PC-9 (cell line): ENCODE measurements at regions of chr2 and their contacts with region 1.

Region 1: DNA sequence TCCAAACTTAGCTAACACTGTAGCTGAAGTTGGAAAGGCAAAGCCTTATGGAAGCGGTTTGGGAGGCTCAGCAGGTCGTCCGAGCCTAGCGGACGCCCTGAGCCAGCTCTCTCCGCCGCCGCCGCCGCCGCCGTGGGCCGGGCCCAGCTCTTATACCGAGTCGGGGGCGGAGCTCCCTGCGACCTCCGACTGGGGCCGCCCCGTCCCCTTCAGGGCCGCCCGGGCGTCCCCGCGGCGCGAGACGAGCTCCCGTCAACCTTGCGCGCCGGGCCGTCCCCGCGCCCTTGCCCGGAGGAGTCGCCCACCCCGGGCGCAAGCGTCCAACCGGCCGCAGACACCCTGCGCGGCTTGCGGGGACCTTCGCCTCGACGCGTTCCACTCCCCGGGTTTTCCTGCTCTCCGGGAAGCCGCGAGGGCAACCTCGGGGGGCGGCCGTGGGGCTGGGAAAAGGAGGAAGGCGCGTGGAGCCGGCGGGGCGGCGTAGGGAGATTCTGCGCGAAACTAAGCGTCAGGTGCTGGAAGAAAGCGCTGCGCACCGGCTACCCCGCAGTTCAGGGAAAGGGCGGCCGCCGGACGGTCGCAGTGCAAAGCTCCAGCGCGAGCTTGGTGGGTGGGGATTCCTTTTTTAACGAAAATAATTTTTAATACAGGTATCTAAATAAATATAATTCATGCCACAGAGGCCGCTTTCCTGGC is at the start of gene SLC40A1:
- DNase-seq: peak; percentile 53 to 76
- H3K4me3 ChIP-seq: peak within 1 kb of the TSS; percentile 73
- H3K27ac ChIP-seq: peak within 1 kb of the TSS; percentile 60
- H3K4me1 ChIP-seq: peaks cover 21% of the 10 kb centered on the region
- H3K27me3 ChIP-seq: no peaks in the 10 kb centered on the region
- CTCF ChIP-seq: no peak
- total RNA-seq, gene SLC40A1: 8.0 and 8.2 TPM in 2 replicates

Region 2: GRCh38 chr2:189483998-189484740 is 96.6 kb before region 1 on chr2:
- CTCF ChIA-PET with region 1: no interaction called
- POLR2A ChIA-PET with region 1: interaction called, 3 read pairs
- intact Hi-C with region 1: loop called (anchors 10 kb)
- DNase-seq: no peak
- H3K4me3 ChIP-seq: no peak overlapping the region
- H3K27ac ChIP-seq: no peak overlapping the region
- H3K4me1 ChIP-seq: peaks cover 12% of the 10 kb centered on the region
- H3K27me3 ChIP-seq: no peaks in the 10 kb centered on the region
- CTCF ChIP-seq: no peak

Region 3: DNA sequence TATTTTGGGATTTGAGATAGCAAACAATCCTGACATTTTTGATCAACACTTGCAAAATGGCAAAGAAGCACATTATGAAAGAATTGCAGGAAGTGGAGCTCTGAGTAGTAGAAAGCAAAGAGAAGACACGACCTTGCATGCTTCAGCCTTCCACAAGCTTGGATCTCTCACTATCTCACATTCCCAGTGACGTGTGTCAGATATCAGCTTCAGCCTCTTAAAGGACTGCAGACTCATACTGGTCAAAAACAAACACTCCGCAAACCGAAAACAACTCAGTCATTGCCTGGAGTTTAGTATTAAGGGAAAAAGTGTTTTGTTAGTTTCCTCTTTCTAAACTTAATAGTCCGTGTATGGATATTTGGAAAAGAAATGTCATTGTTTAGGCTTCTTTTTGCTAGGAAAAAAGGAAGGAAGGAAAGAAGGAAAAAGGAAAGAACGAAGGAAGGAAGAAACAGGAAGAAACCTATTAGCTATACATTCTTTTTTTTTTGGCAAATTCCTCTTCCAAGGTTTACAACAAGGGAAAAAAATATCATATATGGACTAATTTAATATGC is 32.4 kb after region 1 on chr2:
- CTCF ChIA-PET with region 1: no interaction called
- POLR2A ChIA-PET with region 1: interaction called, 5 read pairs
- intact Hi-C with region 1: loop called (anchors 1 kb)
- DNase-seq: peak; percentile 13 to 69
- H3K4me3 ChIP-seq: peak overlapping the region; percentile 8; the same call in 1 of the 2 replicates
- H3K27ac ChIP-seq: peak overlapping the region; percentile 43; the same call in 1 of the 2 replicates
- H3K4me1 ChIP-seq: 0 out of 2 replicates have a peak, but pooled peaks cover 10% of the 10 kb centered on the region
- H3K27me3 ChIP-seq: no peaks in the 10 kb centered on the region
- CTCF ChIP-seq: no peak

Region 4: GRCh38 chr2:189633392-189633811 is 52.6 kb after region 1 on chr2:
- CTCF ChIA-PET with region 1: no interaction called
- POLR2A ChIA-PET with region 1: no interaction called
- intact Hi-C with region 1: no loop called
- DNase-seq: no peak
- H3K4me3 ChIP-seq: no peak overlapping the region
- H3K27ac ChIP-seq: no peak overlapping the region
- H3K4me1 ChIP-seq: no peaks in the 10 kb centered on the region
- H3K27me3 ChIP-seq: no peaks in the 10 kb centered on the region
- CTCF ChIP-seq: peak; percentile 40; the same call in 1 of the 2 replicates

Region 5: DNA sequence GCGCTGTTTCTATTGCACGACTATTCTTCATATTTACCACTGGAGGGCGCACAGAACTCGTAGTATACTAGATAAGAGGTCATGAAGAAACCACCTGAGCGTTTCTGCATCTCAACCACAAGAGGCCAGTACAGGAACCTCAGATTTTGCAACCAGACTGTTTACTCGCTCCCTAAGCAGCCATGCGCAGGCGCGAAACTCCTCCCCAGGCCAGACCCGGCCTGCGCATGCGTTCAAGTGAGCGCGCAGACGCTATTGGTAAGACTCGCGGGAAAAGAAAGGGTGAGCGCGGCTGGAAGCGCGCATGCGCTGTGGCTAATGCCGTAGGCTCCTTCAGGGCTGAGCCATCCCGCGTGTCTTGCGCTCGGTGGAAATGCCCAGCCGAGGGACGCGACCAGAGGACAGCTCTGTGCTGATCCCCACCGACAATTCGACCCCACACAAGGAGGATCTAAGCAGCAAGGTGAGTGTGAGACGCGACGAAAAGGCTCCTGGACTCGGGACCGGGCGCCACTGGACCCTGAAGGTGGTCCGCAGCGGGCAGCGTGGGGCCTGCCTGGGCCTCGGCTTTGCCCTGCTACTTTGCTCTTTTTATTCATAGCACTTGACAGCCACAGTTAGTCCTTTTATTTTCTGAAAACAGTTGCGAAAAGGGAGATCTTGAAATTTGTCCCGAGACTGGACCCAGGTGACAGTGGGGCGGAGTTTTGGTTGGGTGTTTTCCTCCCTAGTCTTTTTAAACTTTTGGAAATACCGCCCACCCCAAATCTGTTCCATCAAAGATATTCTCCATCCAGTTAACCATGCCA is 80.5 kb after region 1 on chr2 and contains the start of gene ASNSD1:
- CTCF ChIA-PET with region 1: no interaction called
- POLR2A ChIA-PET with region 1: no interaction called
- intact Hi-C with region 1: loop called (anchors 1 kb)
- DNase-seq: peak; percentile 94 to 96
- H3K4me3 ChIP-seq: peak within 1 kb of the TSS; percentile 92
- H3K27ac ChIP-seq: no peak within 1 kb of the TSS
- H3K4me1 ChIP-seq: peaks cover 21% of the 10 kb centered on the region
- H3K27me3 ChIP-seq: no peaks in the 10 kb centered on the region
- CTCF ChIP-seq: peak; percentile 87
- total RNA-seq, gene ASNSD1: 14.8 TPM in 2 replicates